ENCODE measurements at regions of chr17 and their contacts with region 1.

Region 1: GRCh38 chr17:39164675-39165143 is 1.3 kb downstream of the ARL5C start:
- DNase-seq: peak; percentile 53
- ATAC-seq: peak; percentile 98
- H3K4me3 ChIP-seq: peak overlapping the region; percentile 71
- H3K27ac ChIP-seq: no peak overlapping the region
- H3K4me1 ChIP-seq: peaks cover 9% of the 10 kb centered on the region
- H3K27me3 ChIP-seq: peaks cover 0 to 2% of the 10 kb centered on the region in 2 experiments; a peak in 2 of 4 replicates
- CTCF ChIP-seq: peak; percentile 83 to 95 (median 89)
- EP300 ChIP-seq: no peak
- POLR2A ChIP-seq: no peak
- RAD21 ChIP-seq: peak; percentile 33; the same call in 1 of the 2 replicates

Region 2: GRCh38 chr17:38891051-38891840 is 273.5 kb before region 1 on chr17:
- CTCF ChIA-PET with region 1: no interaction called
- POLR2A ChIA-PET with region 1: no interaction called
- RAD21 ChIA-PET with region 1: no interaction called
- SMC1A ChIA-PET with region 1: no interaction called
- in situ Hi-C with region 1: no loop called
- intact Hi-C with region 1: no loop called
- DNase-seq: no peak
- ATAC-seq: no peak
- H3K4me3 ChIP-seq: no peak overlapping the region
- H3K27ac ChIP-seq: no peak overlapping the region
- H3K4me1 ChIP-seq: no peaks in the 10 kb centered on the region
- H3K27me3 ChIP-seq: no peaks in the 10 kb centered on the region
- CTCF ChIP-seq: no peak
- EP300 ChIP-seq: no peak
- POLR2A ChIP-seq: no peak
- RAD21 ChIP-seq: no peak

Region 3: GRCh38 chr17:39057701-39058206 is 107.0 kb before region 1 on chr17:
- CTCF ChIA-PET with region 1: interaction called, 13 read pairs
- POLR2A ChIA-PET with region 1: interaction called, 3 read pairs
- RAD21 ChIA-PET with region 1: no interaction called
- SMC1A ChIA-PET with region 1: no interaction called
- in situ Hi-C with region 1: no loop called
- intact Hi-C with region 1: no loop called
- DNase-seq: no peak
- ATAC-seq: no peak
- H3K4me3 ChIP-seq: peak overlapping the region; percentile 43; the same call in 1 of the 2 replicates
- H3K27ac ChIP-seq: no peak overlapping the region
- H3K4me1 ChIP-seq: 0 out of 2 replicates have a peak, but pooled peaks cover 4% of the 10 kb centered on the region
- H3K27me3 ChIP-seq: no peaks in the 10 kb centered on the region
- CTCF ChIP-seq: no peak
- EP300 ChIP-seq: no peak
- POLR2A ChIP-seq: no peak
- RAD21 ChIP-seq: no peak

Region 4: DNA sequence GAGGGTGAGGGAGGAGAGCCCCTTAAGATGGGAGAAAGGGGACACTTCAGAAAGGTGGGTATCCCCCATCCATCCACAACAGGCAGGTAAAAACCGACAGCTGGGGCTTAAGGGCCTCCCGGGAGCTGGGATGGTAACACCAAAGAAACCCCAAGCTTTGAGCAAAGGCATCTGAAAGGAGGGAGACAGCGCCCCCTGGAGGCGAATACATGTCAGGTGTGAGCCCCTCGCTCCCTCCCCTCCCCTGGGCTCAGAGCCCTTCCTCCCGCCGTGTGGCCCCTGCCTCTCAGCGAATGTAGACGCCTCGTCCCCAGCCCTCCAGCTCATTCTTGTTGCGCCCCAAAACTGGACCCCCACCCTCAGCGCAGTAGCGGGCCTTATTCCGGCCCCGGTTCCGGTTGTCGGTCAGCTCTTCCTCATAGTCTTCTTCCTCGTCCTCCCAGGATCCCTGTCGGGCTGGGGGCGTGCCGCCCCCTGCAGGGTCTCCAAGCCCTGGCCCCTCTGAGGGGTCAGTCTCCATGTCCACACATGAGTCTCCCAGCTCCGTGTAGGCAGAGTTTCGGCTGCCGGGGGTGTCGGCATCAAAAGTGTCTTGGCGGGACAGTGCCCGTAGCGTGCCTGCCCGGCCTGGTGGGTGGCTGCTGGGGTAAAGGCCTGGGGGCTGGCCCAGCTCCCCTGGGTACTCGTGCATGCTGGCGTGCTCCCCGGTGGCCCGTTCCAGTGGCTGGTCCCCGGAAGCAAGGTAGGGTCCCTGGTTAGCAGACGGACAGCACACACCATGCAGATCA is 10.4 kb after region 1 on chr17:
- CTCF ChIA-PET with region 1: interaction called, 117 read pairs
- POLR2A ChIA-PET with region 1: interaction called, 10 read pairs
- RAD21 ChIA-PET with region 1: interaction called, 19 read pairs
- SMC1A ChIA-PET with region 1: interaction called, 26 read pairs
- in situ Hi-C with region 1: no loop called
- intact Hi-C with region 1: no loop called
- DNase-seq: no peak
- ATAC-seq: peak; percentile 93
- H3K4me3 ChIP-seq: no peak overlapping the region
- H3K27ac ChIP-seq: no peak overlapping the region
- H3K4me1 ChIP-seq: no peaks in the 10 kb centered on the region
- H3K27me3 ChIP-seq: no peaks in the 10 kb centered on the region
- CTCF ChIP-seq: peak; percentile 69 to 83 (median 81)
- EP300 ChIP-seq: no peak
- POLR2A ChIP-seq: no peak
- RAD21 ChIP-seq: peak; percentile 49

Region 5: DNA sequence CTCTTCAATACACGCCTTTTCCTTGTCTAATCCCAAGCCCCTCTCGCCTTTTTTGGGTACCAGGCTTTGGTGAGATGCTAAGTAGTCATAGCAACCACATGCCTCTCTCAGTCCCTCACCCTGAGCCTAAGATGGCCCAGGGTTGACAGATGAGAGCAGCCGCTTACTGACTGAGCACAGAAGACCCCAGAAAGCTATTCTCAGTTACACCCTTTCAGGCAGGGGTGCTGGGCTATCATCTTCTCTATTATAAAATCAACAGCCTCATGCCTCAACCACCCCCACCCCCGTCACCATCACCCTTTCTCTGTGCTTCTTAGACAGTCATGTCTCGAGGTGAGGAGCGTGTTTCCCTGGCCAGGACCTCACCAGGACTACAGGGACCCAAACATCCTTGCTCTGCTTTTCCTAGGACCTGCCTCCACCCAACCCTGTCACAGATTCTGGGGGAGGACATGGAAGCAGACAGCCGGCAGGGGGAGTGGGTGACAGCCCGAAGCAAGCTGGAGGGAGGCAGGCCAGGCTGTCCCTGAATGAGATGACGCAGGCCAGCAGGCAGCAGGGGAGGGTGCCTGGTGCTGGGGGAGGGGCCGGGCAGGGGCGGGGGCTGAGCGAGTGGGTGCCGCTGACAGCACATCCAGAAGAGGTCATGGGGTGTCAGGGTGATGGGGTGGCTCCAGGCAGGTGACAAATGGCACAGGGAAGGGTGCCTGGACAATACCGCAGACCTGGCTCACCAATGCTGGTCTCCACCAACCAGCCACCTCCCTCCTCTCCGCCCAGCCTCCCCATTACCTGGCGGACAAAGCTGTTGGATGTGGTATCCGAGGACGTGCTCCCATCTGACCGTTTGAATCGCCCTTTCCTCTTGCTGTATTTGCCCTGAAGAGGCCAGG is 29.6 kb after region 1 on chr17:
- CTCF ChIA-PET with region 1: interaction called, 21 read pairs
- POLR2A ChIA-PET with region 1: no interaction called
- RAD21 ChIA-PET with region 1: interaction called, 11 read pairs
- SMC1A ChIA-PET with region 1: interaction called, 3 read pairs
- in situ Hi-C with region 1: no loop called
- intact Hi-C with region 1: no loop called
- DNase-seq: no peak
- ATAC-seq: no peak
- H3K4me3 ChIP-seq: no peak overlapping the region
- H3K27ac ChIP-seq: no peak overlapping the region
- H3K4me1 ChIP-seq: peaks cover 14% of the 10 kb centered on the region
- H3K27me3 ChIP-seq: no peaks in the 10 kb centered on the region
- CTCF ChIP-seq: no peak
- EP300 ChIP-seq: no peak
- POLR2A ChIP-seq: no peak
- RAD21 ChIP-seq: no peak

Region 6: DNA sequence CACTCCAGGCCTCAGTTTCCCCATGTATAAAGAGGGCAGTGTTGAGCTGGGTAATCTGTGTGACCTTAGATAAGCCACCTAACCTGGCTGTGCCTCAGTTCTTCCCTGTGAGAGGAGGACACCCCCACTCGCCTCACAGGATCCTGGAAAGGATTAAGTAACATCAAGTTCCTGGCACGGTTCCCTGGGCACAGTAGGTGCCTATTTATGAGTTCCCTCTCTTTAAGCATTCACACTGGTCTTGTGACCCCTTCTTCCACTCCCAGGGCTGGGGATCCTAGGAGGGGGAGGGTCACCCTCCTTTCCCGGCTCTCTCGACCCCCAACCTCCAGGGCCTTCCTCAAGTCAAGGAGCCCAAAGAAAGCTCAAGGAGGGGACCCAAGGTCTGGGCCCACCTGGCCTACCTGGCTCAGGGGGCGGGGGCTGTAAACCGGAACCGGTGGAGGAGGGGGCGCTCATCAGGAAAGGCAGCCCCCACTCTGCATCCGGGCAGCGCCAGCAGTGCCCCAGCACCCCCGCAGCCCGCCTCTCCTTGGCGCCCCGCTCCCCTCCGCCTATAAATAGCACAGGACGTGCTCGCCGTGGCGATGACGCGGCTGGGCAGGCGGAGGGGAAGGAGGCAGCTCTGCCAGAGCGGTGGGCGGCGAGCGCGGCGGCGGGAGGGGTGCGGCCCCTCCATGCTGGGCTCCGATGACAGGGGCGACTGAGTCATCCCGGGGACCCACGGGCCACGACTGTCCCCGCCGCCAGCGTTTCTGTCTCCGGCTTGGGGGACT is 44.8 kb after region 1 on chr17:
- CTCF ChIA-PET with region 1: interaction called, 14 read pairs
- POLR2A ChIA-PET with region 1: no interaction called
- RAD21 ChIA-PET with region 1: interaction called, 6 read pairs
- SMC1A ChIA-PET with region 1: interaction called, 5 read pairs
- in situ Hi-C with region 1: no loop called
- intact Hi-C with region 1: no loop called
- DNase-seq: no peak
- ATAC-seq: peak; percentile 12
- H3K4me3 ChIP-seq: peak overlapping the region; percentile 34; the same call in 1 of the 2 replicates
- H3K27ac ChIP-seq: no peak overlapping the region; the same call in 1 of the 2 replicates
- H3K4me1 ChIP-seq: peaks cover 27% of the 10 kb centered on the region
- H3K27me3 ChIP-seq: peaks cover 2 to 3% of the 10 kb centered on the region in 2 experiments; a peak in 1 of 4 replicates
- CTCF ChIP-seq: no peak
- EP300 ChIP-seq: no peak
- POLR2A ChIP-seq: peak; percentile 41; the same call in 1 of the 2 replicates
- RAD21 ChIP-seq: no peak

Region 7: GRCh38 chr17:39244600-39245570 is 80.2 kb after region 1 on chr17:
- CTCF ChIA-PET with region 1: interaction called, 26 read pairs
- POLR2A ChIA-PET with region 1: no interaction called
- RAD21 ChIA-PET with region 1: interaction called, 23 read pairs
- SMC1A ChIA-PET with region 1: interaction called, 15 read pairs
- in situ Hi-C with region 1: no loop called
- intact Hi-C with region 1: no loop called
- DNase-seq: peak; percentile 40
- ATAC-seq: peak; percentile 96
- H3K4me3 ChIP-seq: no peak overlapping the region
- H3K27ac ChIP-seq: no peak overlapping the region
- H3K4me1 ChIP-seq: peaks cover 9% of the 10 kb centered on the region
- H3K27me3 ChIP-seq: no peaks in the 10 kb centered on the region; a peak in 2 of 4 replicates
- CTCF ChIP-seq: peak; percentile 90 to 97 (median 94); a peak in 5 of 6 replicates
- EP300 ChIP-seq: no peak
- POLR2A ChIP-seq: no peak
- RAD21 ChIP-seq: peak; percentile 90

Measured in GM12878 (cell line).